PC-3 (cell line): ENCODE measurements at regions of chr11 and their contacts with region 1.

Region 1: GRCh38 chr11:39221550-39222138 is 2237.8 kb downstream of the LRRC4C start:
- DNase-seq: peak; percentile 60
- ATAC-seq: peak; percentile 87
- H3K4me3 ChIP-seq: no peak overlapping the region
- H3K27ac ChIP-seq: peak overlapping the region; percentile 59
- H3K4me1 ChIP-seq: peaks cover 14% of the 10 kb centered on the region
- H3K27me3 ChIP-seq: no peaks in the 10 kb centered on the region
- CTCF ChIP-seq: no peak

Region 2: DNA sequence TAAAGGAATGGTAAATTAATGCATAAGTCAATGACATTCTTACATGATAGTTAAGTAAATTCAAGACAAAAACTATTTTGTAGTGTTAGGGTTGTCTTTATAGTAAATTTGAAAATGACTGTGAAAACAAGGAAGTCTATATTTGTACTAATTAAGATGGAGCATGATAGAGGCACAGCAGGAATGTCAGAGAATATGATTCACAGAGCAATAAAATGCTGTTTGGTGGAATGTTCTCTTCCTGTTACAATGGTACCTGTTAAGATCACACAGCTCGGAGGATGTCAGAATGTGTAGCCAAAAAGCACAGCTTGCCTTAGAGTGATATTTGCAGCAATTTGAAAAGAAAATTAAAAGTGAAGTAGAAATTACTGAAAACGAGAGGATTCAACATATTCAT is 283.9 kb before region 1 on chr11:
- CTCF ChIA-PET with region 1: no interaction called
- POLR2A ChIA-PET with region 1: no interaction called
- intact Hi-C with region 1: loop called (anchors 2 kb)
- DNase-seq: peak; percentile 57
- ATAC-seq: peak; percentile 98
- H3K4me3 ChIP-seq: no peak overlapping the region
- H3K27ac ChIP-seq: no peak overlapping the region
- H3K4me1 ChIP-seq: no peaks in the 10 kb centered on the region; the same call in 1 of the 2 replicates
- H3K27me3 ChIP-seq: no peaks in the 10 kb centered on the region
- CTCF ChIP-seq: no peak

Region 3: DNA sequence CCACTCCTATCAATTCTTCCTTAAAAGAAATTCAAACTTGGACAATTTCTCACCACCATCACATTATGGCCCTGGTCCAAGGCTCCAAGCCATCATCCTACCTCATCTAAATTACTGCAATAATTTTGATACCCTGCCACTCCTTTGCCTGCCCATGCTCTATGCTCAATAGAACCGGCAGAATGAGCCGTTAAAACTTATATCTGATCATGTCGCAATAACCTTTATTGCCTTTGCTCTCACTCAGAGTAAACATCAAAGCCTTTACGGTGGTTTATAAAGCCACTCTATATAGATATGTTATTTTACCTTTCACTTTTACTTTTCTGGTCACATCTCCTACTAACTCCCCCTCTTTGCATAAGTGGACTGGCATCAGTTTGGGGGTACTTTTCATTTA is 231.5 kb before region 1 on chr11:
- CTCF ChIA-PET with region 1: no interaction called
- POLR2A ChIA-PET with region 1: no interaction called
- intact Hi-C with region 1: no loop called
- DNase-seq: peak; percentile 35
- ATAC-seq: no peak
- H3K4me3 ChIP-seq: no peak overlapping the region
- H3K27ac ChIP-seq: no peak overlapping the region
- H3K4me1 ChIP-seq: no peaks in the 10 kb centered on the region
- H3K27me3 ChIP-seq: no peaks in the 10 kb centered on the region
- CTCF ChIP-seq: no peak

Region 4: DNA sequence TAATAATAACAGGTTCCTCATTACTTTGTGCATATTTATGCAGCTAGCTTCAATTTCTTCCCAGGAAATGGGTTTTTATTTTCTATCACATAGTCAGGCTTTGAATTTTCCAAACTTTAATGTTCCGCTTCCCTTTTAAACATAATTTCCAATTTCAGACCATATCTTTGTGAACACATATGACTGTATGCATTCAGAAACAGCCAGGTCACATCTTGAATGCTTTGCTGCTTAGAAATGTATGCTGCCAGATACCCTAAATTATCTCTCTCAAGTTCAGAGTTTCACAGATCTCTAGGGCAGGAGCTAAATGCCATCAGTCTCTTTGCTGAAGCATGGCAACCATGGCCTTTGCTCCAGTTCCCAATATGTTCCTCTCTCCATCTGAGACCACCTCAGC is 34.0 kb after region 1 on chr11:
- CTCF ChIA-PET with region 1: no interaction called
- POLR2A ChIA-PET with region 1: no interaction called
- intact Hi-C with region 1: loop called (anchors 1 kb)
- DNase-seq: no peak
- ATAC-seq: no peak
- H3K4me3 ChIP-seq: no peak overlapping the region
- H3K27ac ChIP-seq: no peak overlapping the region
- H3K4me1 ChIP-seq: no peaks in the 10 kb centered on the region
- H3K27me3 ChIP-seq: no peaks in the 10 kb centered on the region
- CTCF ChIP-seq: no peak